ENCODE measurements at regions of chr17 and their contacts with region 1.

Region 1: DNA sequence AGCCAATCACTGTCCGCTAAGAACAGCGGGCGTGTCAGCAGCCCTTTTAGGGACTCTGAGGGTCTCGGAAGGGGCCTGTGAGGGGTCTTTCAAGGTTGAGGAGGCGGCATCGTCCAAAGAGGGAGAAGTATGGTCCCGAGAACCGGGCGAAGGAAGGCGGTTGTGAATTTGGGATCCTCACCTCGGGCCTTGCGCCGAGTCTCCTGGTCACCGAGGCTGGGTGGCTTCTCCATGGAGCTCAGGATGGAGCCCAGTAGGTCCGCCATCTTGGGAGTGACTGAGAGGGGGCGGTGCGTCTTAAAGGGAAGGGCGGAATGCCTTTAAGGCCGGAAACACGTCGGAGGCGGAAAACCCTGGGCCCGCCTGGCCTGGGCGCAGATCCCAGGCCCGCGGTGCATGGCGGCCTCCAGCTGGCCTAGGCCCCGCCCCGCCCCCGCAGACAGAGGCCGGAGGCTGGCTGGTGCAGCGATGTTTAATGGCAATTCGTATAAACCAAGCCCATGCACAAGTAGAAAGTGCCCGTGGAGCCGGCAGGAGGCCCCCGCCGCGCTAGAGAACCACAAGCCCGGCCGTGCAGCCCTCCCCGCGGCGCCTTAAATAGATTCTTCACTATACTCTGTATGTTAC is at the start of gene SPAG7:
- DNase-seq: peak; percentile 94 to 96
- H3K4me3 ChIP-seq: peak within 1 kb of the TSS; percentile 65 to 86 (median 65)
- H3K27ac ChIP-seq: peak within 1 kb of the TSS; percentile 95 to 97
- H3K4me1 ChIP-seq: peaks cover 0 to 19% of the 10 kb centered on the region in 2 donors
- H3K27me3 ChIP-seq: no peaks in the 10 kb centered on the region
- CTCF ChIP-seq: no peak
- POLR2A ChIP-seq: peak; percentile 73
- total RNA-seq, gene SPAG7: 42.6 to 57.8 (median 55.2) TPM

Region 2: DNA sequence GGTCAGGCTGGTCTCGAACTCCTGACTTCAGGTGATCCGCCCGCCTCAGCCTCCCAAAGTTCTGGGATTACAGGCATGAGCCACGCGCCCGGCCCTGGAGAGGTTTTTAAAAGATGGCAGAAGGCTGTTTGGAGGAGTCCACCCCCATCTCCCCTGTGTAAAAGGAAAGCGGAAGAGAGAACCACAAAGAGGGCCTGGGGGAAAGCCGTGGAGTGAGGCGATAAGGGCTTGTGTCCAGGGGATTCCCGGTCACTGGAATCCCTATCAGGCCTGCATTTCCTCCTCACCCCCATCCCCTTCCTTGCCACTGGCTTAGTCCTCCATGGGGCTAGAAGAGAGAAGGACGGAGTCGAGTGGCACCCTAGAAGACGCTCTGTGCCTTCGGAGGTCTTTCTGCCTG is 35.7 kb before region 1 on chr17 and contains the start of gene GP1BA:
- intact Hi-C with region 1: no loop called
- DNase-seq: no peak
- H3K4me3 ChIP-seq: no peak within 1 kb of the TSS
- H3K27ac ChIP-seq: no peak within 1 kb of the TSS
- H3K4me1 ChIP-seq: peaks cover 0 to 8% of the 10 kb centered on the region in 2 donors
- H3K27me3 ChIP-seq: no peaks in the 10 kb centered on the region
- CTCF ChIP-seq: no peak
- POLR2A ChIP-seq: no peak
- total RNA-seq, gene GP1BA: not detected

Region 3: DNA sequence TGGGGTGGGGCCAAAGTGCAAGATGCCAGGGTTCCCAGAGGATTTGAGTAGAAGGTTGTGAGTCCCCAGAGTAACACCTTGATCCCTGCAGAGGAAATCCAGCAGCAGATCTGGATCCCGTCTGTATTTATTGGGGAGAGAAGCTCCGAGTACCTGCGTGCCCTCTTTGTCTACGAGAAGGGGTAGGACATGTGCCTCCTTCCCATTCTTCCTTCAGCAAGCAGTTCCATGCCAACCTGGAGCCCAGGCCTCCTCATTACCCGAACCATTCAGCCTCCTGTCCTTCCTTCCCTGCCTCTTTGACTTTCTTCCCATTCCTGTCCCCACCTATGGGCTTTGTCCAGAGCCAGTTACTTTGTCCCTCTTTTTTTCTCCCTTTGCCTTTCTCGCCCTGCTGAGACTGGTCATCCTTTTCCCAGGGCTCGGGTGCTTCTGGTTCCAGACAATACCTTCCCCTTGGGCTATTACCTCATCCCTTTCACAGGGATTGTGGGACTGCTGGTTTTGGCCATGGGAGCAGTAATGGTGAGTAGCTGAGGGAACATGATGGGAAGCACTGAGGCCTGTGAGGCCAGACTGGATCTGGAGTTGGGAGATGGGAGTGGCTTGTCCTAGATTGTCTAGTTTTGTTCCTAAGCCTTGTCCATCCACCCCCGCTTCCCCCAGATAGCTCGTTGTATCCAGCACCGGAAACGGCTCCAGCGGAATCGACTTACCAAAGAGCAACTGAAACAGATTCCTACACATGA is 24.7 kb before region 1 on chr17:
- intact Hi-C with region 1: loop called (anchors 2 kb)
- DNase-seq: no peak
- H3K4me3 ChIP-seq: no peak overlapping the region
- H3K27ac ChIP-seq: peak overlapping the region in 1 of 2 donors; percentile 20
- H3K4me1 ChIP-seq: peaks cover 25 to 47% of the 10 kb centered on the region in 2 donors
- H3K27me3 ChIP-seq: no peaks in the 10 kb centered on the region
- CTCF ChIP-seq: no peak
- POLR2A ChIP-seq: no peak

Region 4: DNA sequence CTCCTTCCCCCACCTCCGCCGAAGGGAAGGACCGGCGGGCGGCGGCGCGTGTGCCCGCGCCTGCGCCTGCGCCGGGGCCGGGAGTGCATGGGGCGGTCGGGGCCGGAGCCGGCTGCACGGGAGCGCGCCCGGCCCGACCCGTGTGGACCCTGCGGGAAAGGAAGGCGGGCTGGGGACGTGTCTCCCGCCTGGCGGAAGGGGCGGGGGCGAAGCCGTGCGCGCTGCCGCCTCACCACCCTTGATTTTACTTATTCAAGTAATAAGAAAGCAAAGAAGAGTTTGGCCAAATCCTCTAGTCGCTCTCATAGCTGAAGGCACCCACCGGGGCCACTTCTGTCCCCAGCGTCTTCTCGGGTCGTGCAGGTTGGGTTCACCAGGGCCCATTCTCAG is 18.7 kb before region 1 on chr17:
- intact Hi-C with region 1: loop called (anchors 2 kb)
- DNase-seq: peak; percentile 70 to 80
- H3K4me3 ChIP-seq: peak overlapping the region; percentile 98 to 100 (median 99)
- H3K27ac ChIP-seq: peak overlapping the region; percentile 97 to 99
- H3K4me1 ChIP-seq: peaks cover 8 to 29% of the 10 kb centered on the region in 2 donors
- H3K27me3 ChIP-seq: no peaks in the 10 kb centered on the region
- CTCF ChIP-seq: no peak
- POLR2A ChIP-seq: no peak

Region 5: DNA sequence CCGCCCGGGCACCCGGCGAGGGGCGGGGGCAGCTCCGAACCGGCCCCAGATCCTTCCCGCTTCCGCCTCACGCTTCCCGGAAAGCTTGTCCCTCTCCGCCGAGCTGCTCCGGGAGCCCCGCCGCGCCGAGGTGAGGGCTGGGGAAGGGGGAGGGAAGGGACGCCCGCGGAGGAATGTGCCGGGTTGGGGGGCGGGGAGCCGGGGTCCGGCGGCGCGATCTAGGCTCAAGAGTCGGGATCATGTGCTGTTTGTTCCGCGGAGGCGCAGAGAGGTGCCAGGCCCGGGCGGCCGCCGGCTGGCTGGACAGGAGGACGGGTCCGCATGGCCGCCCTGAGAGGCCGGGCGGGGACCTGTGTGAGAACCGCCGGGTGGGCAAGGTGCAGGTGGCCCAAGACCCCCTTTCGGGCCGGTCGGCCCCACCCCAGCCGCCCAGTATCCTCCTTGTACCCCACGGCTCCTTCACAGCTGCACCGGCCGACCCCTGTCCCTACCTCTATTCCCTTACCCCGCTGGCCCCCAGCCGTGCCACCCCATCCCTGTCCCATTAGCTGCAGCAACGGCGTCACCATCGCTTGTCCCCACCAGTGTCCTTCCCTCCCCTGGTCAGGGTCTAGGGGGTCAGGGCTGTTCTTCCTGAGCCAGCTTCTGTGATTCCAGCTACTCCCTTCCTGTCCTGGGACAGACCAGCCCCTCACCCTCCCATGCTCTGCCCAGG is 30.5 kb after region 1 on chr17:
- intact Hi-C with region 1: no loop called
- DNase-seq: peak in 1 of 2 donors; percentile 26
- H3K4me3 ChIP-seq: peak overlapping the region; percentile 78 to 93 (median 88)
- H3K27ac ChIP-seq: peak overlapping the region; percentile 94
- H3K4me1 ChIP-seq: peaks cover 9 to 12% of the 10 kb centered on the region in 2 donors
- H3K27me3 ChIP-seq: no peaks in the 10 kb centered on the region
- CTCF ChIP-seq: no peak
- POLR2A ChIP-seq: no peak

Region 6: GRCh38 chr17:5715478-5715877 is 747.8 kb after region 1 on chr17:
- intact Hi-C with region 1: no loop called
- DNase-seq: no peak
- H3K4me3 ChIP-seq: no peak overlapping the region
- H3K27ac ChIP-seq: no peak overlapping the region
- H3K4me1 ChIP-seq: no peaks in the 10 kb centered on the region
- H3K27me3 ChIP-seq: peaks cover 0 to 30% of the 10 kb centered on the region in 2 donors
- CTCF ChIP-seq: no peak
- POLR2A ChIP-seq: no peak